ENCODE measurements at regions of chr7 and their contacts with region 1.

Region 1: DNA sequence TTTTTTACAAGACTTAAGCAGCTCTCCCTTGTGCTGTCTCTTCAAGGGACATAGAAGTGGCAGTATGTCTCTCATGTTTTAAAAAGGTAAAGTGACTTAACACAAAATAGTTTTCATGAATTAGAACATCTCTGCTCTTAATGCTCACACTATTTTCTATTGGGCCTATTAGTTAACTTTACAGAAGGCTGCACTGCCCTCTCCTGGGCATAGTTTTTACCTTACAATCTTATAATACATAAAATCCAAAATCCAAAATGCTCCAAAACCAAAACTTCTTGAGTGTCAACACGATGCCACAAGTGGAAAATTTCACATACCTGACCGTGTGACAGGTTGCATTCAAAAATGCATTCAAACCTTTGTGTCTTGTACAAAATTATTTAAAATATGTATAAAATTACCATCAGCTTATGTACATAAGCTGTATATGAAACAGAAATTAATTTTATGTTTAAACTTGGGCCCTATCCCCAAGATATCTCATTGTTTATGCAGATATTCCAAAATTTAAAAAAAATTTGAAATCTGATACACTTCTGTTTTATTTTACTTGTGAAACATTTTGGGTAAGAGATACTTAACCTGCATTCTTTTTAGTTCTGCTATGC is 25.8 kb downstream of the TES start:
- DNase-seq: peak; percentile 60
- H3K4me3 Mint-ChIP-seq: no peak overlapping the region
- H3K27ac Mint-ChIP-seq: no peak overlapping the region
- H3K4me1 Mint-ChIP-seq: peaks cover 50% of the 10 kb centered on the region
- H3K27me3 Mint-ChIP-seq: no peaks in the 10 kb centered on the region

Region 2: GRCh38 chr7:116173051-116174028 is 62.8 kb before region 1 on chr7:
- CTCF ChIA-PET with region 1: interaction called, 198 read pairs
- POLR2A ChIA-PET with region 1: no interaction called
- DNase-seq: no peak
- H3K4me3 Mint-ChIP-seq: no peak overlapping the region
- H3K27ac Mint-ChIP-seq: no peak overlapping the region
- H3K4me1 Mint-ChIP-seq: peaks cover 7% of the 10 kb centered on the region
- H3K27me3 Mint-ChIP-seq: peaks cover 27% of the 10 kb centered on the region

Region 3: GRCh38 chr7:116211006-116211912 is 24.9 kb before region 1 on chr7:
- CTCF ChIA-PET with region 1: interaction called, 43 read pairs
- POLR2A ChIA-PET with region 1: interaction called, 58 read pairs
- DNase-seq: peak; percentile 82
- H3K4me3 Mint-ChIP-seq: peak overlapping the region; percentile 91
- H3K27ac Mint-ChIP-seq: peak overlapping the region; percentile 97
- H3K4me1 Mint-ChIP-seq: peaks cover 52% of the 10 kb centered on the region
- H3K27me3 Mint-ChIP-seq: no peaks in the 10 kb centered on the region

Region 4: GRCh38 chr7:116224492-116225098 is 11.5 kb before region 1 on chr7:
- CTCF ChIA-PET with region 1: interaction called, 10 read pairs
- POLR2A ChIA-PET with region 1: interaction called, 3 read pairs
- DNase-seq: no peak
- H3K4me3 Mint-ChIP-seq: no peak overlapping the region
- H3K27ac Mint-ChIP-seq: no peak overlapping the region
- H3K4me1 Mint-ChIP-seq: peaks cover 61% of the 10 kb centered on the region
- H3K27me3 Mint-ChIP-seq: no peaks in the 10 kb centered on the region

Region 5: GRCh38 chr7:116525913-116526861 is 290.1 kb after region 1 on chr7:
- CTCF ChIA-PET with region 1: interaction called, 10 read pairs
- POLR2A ChIA-PET with region 1: no interaction called
- DNase-seq: peak; percentile 70
- H3K4me3 Mint-ChIP-seq: peak overlapping the region; percentile 75
- H3K27ac Mint-ChIP-seq: no peak overlapping the region
- H3K4me1 Mint-ChIP-seq: peaks cover 25% of the 10 kb centered on the region
- H3K27me3 Mint-ChIP-seq: peaks cover 75% of the 10 kb centered on the region